OCI-LY7 (cell line): ENCODE measurements at regions of chr13 and their contacts with region 1.

Region 1: DNA sequence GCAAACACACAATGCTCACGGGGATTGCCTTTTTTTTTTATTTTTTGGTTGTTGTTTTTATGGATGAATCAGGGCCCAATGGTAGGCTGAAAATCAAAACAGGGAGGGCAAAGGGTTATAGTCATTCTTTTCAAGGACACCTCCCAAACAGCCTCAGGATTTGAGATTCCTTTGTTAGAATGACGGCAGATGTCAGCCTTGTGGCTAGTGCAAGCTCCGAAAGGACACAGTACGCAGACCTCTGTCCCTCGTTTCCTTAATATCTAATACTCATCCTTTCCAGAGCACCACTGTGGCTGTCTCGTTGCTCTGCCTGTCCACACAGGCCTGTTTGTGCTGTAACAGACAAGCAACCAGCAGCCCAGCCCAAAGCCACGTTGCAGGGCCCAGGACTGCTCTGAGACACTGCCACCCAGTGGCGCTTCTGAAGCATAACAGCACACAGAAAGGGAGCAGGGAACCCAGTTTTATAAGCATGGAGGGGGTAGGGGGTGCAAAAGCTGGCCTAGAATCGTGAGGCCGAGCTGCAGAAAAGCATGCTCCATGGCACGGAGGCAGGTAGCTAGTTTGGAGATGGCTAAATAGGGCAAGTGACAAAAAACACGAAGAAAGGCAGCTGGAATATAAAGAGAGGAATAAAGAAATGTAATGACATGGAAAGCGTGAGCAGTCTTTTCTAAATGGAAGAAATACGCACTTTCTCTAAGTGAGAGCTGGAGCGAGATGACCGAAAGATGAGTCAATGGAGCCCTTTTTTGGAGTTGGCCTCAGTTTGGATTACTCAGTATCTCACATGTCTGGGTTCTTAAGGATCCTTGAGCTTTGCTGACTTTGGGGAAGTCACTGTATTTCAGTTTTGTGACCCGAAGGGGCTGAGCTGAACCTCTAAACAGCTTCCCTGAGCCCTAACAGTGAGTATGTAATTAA is 40.7 kb upstream of the MEDAG start:
- DNase-seq: peak; percentile 78
- H3K4me3 ChIP-seq: no peak overlapping the region
- H3K27ac ChIP-seq: no peak overlapping the region
- H3K4me1 ChIP-seq: no peaks in the 10 kb centered on the region
- CTCF ChIP-seq: peak; percentile 96

Region 2: GRCh38 chr13:30306762-30307193 is 558.6 kb before region 1 on chr13:
- CTCF ChIA-PET with region 1: no interaction called
- POLR2A ChIA-PET with region 1: no interaction called
- intact Hi-C with region 1: no loop called
- DNase-seq: peak; percentile 98
- H3K4me3 ChIP-seq: peak overlapping the region; percentile 82
- H3K27ac ChIP-seq: peak overlapping the region; percentile 70
- H3K4me1 ChIP-seq: peaks cover 72% of the 10 kb centered on the region
- CTCF ChIP-seq: no peak

Region 3: GRCh38 chr13:30600496-30600895 is 264.9 kb before region 1 on chr13:
- CTCF ChIA-PET with region 1: no interaction called
- POLR2A ChIA-PET with region 1: no interaction called
- intact Hi-C with region 1: loop called (anchors 5 kb)
- DNase-seq: no peak
- H3K4me3 ChIP-seq: no peak overlapping the region
- H3K27ac ChIP-seq: no peak overlapping the region
- H3K4me1 ChIP-seq: no peaks in the 10 kb centered on the region
- CTCF ChIP-seq: no peak

Region 4: DNA sequence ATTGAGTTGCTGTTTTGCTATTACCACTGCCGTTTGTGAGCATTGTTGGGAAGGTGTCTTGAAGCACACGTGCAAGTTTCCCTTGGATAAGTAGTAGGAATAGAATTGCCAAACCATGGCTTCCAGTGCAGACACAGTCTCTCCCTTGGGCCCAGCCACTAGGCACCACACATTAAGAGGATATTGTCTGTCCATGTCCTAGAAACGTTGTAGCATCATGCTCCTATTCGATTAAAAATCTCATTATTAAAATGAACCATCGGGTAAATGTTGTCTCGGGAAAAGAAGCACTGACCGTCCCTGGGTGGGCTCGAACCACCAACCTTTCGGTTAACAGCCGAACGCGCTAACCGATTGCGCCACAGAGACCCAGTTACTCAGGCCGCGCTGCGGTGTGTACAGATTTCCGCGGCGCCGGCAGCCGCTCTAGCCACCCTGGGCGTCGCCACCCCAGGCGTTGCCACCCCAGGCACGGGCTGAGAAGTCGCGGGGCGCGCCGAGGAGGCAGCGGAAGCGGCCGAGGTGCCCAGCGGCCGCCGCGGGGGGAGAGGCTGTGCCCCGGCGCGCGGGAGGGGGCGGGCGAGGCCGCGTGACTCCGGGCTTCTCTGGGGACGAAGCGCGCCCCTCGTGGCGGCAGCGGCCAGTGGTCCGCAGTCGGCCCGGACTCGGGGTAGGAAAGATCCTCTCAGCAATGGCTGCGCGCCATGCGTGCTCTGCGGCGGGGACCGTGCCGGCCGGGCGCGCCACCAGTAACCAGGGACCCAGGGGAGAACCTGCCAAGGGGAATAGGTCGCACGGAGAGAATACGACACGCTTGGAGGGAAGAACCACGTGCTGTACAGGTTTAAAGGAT is 191.5 kb before region 1 on chr13:
- CTCF ChIA-PET with region 1: no interaction called
- POLR2A ChIA-PET with region 1: no interaction called
- intact Hi-C with region 1: loop called (anchors 10 kb)
- DNase-seq: peak; percentile 86
- H3K4me3 ChIP-seq: peak overlapping the region; percentile 63
- H3K27ac ChIP-seq: no peak overlapping the region
- H3K4me1 ChIP-seq: peaks cover 9% of the 10 kb centered on the region
- CTCF ChIP-seq: peak; percentile 73

Region 5: DNA sequence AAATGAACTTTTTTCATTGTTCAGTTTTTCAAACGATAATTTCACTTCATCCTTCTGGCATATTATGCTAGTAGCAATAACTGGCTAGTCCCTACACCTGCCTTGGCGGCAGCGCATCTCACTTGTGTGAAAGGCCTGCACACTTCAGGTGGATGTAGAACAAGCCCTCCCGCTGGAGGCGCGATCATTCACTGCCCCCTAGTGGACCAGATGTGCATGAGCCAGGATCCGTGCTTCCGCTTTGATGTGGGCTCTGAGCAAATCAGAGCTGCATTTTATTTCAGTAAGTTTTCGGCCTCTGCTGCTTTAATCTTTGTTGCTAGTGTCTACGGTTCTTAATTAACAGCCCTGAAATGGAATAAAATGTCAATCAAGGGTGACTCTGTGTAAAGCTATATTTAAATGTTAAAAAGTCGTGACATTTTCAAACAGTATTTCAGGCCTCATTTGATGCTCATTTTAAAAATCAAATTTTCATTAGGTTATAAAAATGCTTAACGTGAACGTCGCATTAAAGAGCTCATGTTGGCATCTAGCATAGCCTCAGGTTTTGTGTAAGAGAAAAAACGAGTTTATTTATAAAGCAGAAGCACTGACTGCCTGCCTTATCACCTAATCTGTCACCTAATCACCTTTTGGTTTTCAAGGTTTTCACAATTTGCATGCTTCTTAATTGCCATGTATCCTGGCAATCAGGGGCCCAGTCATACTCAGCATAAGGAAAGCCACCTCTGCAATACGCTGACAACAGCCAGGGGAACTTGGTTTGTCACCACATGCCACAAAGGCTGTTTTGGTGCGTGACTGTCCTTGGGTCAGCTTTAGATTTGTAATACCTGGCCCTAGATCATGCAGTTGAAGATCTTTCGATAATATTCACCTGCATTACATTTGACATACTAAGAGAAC is 179.2 kb after region 1 on chr13:
- CTCF ChIA-PET with region 1: interaction called, 3 read pairs
- POLR2A ChIA-PET with region 1: no interaction called
- intact Hi-C with region 1: loop called (anchors 1 kb)
- DNase-seq: peak; percentile 84
- H3K4me3 ChIP-seq: no peak overlapping the region
- H3K27ac ChIP-seq: no peak overlapping the region
- H3K4me1 ChIP-seq: peaks cover 12% of the 10 kb centered on the region
- CTCF ChIP-seq: peak; percentile 98